ENCODE measurements at regions of chr1 and their contacts with region 1.

Region 1: DNA sequence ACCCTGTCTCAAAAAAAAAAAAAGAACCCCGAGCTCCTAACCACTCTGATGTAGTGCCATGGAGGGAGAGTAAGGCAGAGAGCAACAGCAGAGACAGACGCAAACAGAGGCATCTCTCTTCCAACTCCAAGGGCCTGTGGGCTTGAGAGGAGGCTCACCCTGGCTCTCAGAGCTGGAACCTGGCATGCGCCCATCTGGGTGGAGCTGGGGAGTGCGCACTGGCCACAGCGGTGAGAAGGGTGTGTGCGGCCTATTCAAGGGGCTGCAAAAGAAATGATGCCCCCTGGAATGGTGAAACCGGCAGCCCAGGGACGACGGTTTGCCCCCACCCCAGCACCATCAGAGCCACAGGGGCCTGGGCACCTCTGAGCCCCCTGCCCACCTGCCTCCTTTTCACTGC is 17.6 kb downstream of the COL8A2 start:
- DNase-seq: no peak
- H3K4me3 ChIP-seq: no peak overlapping the region
- H3K4me3 Mint-ChIP-seq: no peak overlapping the region
- H3K27ac ChIP-seq: no peak overlapping the region
- H3K27ac Mint-ChIP-seq: no peak overlapping the region
- H3K4me1 ChIP-seq: peaks cover 12% of the 10 kb centered on the region
- H3K4me1 Mint-ChIP-seq: peaks cover 16 to 34% (median 19%) of the 10 kb centered on the region in 3 donors
- H3K27me3 ChIP-seq: no peaks in the 10 kb centered on the region
- H3K27me3 Mint-ChIP-seq: peaks cover 0 to 2% of the 10 kb centered on the region in 2 donors

Region 2: DNA sequence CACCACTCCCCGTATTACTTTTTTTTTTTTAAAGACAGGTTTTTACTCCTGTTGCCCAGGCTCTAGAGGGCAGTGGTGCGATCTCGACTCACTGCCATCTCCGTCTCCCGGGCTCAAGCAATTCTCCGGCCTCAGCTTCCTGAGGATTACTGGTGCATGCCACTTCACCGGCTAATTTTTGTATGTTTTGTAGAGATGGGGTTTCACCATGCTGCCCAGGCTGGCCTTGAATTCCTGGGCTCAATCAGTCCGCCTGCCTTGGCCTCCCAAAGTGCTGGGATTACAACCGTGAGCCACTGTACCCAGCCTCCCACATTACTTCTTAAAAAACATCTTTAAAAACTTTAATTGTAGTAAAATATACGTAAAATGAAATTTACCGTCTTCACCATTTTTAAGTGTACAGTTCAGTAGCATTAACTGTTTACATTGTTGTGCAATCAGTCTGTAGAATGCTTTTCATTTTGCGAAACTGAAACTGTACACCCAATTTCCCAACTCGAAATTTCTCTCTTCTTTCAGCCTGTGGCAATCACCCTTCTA is 761.9 kb before region 1 on chr1:
- CTCF ChIA-PET with region 1: no interaction called
- POLR2A ChIA-PET with region 1: no interaction called
- DNase-seq: no peak
- H3K4me3 ChIP-seq: no peak overlapping the region
- H3K4me3 Mint-ChIP-seq: no peak overlapping the region
- H3K27ac ChIP-seq: no peak overlapping the region
- H3K27ac Mint-ChIP-seq: no peak overlapping the region
- H3K4me1 ChIP-seq: no peaks in the 10 kb centered on the region
- H3K4me1 Mint-ChIP-seq: peaks cover 10 to 26% (median 18%) of the 10 kb centered on the region in 3 donors
- H3K27me3 ChIP-seq: no peaks in the 10 kb centered on the region
- H3K27me3 Mint-ChIP-seq: no peaks in the 10 kb centered on the region

Region 3: DNA sequence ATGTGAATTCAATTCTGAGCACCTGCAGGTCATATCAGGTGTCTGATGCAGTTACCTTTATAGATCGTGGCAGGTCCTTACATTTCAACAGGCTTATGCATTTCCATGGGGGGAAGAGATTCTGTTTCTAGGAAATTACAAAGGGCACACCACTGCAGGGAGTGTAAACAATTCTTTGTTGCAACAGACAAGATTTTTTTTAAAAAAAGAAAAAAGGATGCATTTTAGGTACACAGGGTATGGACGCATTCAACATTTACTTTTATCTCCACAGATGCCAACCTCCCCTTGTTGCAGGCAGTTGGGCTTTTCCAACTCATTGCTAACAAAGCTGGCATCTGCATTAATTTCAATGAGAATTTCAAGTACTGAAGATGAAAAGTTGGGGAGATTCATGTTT is 37.0 kb before region 1 on chr1:
- CTCF ChIA-PET with region 1: no interaction called
- POLR2A ChIA-PET with region 1: no interaction called
- DNase-seq: no peak
- H3K4me3 ChIP-seq: no peak overlapping the region
- H3K4me3 Mint-ChIP-seq: no peak overlapping the region
- H3K27ac ChIP-seq: no peak overlapping the region
- H3K27ac Mint-ChIP-seq: no peak overlapping the region
- H3K4me1 ChIP-seq: no peaks in the 10 kb centered on the region
- H3K4me1 Mint-ChIP-seq: no peaks in the 10 kb centered on the region
- H3K27me3 ChIP-seq: no peaks in the 10 kb centered on the region
- H3K27me3 Mint-ChIP-seq: no peaks in the 10 kb centered on the region

Region 4: DNA sequence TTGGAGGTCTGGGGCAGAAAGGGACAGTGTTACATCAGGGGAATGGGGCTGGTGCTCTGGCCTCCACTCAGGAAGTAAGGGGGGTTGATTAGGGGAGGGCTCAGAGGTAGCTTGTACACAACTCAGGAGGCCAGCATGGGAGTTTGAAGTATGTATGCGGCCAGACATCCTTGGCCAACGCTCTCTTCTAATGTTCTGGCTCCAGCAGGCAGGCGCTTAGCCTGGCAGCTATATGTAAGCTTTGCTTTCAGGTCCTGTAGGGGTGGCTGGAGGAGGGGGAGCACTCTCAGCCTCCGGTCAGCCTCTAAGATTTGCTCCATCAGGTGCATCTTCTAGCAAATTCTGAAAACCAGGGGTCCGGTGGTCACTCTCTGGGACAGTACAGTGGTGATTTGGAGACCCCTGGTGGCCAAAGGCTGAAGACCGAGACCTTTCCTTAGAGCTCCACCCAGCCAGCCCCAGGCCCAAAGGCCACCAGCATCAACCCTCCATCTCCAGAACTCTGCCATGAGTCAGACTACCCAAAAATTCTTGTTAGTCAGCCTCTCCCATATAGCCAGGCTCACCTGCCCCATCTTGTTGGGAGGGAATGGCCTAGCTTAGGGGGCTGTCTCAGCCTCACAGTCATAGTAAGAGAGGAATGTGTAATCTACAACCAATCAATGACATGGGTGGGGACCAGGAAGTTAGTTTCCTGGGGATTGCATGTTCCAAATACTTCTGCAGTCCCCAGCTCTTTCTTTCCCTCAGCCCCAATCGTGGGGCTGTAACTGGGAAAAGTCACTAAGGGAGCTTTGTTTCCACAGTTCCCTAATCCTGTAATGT is 27.3 kb after region 1 on chr1:
- CTCF ChIA-PET with region 1: interaction called, 76 read pairs
- POLR2A ChIA-PET with region 1: interaction called, 6 read pairs
- DNase-seq: no peak
- H3K4me3 ChIP-seq: no peak overlapping the region
- H3K4me3 Mint-ChIP-seq: no peak overlapping the region
- H3K27ac ChIP-seq: no peak overlapping the region
- H3K27ac Mint-ChIP-seq: peak overlapping the region in 2 of 8 donors; percentile 58 to 76
- H3K4me1 ChIP-seq: no peaks in the 10 kb centered on the region
- H3K4me1 Mint-ChIP-seq: peaks cover 0 to 8% (median 3%) of the 10 kb centered on the region in 3 donors
- H3K27me3 ChIP-seq: no peaks in the 10 kb centered on the region
- H3K27me3 Mint-ChIP-seq: no peaks in the 10 kb centered on the region